Breast epithelium (tissue), 4 donors: ENCODE measurements at regions of chr5 and their contacts with region 1.

Region 1: DNA sequence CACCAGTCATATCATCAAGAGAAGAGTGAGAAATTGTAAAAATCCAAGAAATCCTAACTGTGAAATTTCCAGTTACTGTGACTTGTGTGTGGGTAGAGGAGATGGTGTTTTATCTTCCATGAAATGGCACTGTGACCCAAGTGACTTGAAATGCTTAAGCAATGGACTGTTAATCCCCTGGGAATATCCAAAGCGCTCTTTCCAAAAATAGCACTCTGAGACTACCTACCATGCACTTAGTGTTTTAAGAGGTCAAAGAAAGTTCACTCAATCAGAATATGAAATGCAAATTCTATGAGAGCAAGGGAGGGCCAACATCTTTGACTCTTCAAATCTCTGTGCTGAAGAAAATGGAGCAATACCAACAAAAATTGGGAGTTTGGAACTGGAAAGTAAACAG is 244.0 kb downstream of the GABRB2 start:
- DNase-seq: no peak
- H3K4me3 ChIP-seq: no peak overlapping the region
- H3K27ac ChIP-seq: no peak overlapping the region
- H3K4me1 ChIP-seq: no peaks in the 10 kb centered on the region
- H3K27me3 ChIP-seq: no peaks in the 10 kb centered on the region
- CTCF ChIP-seq: no peak
- POLR2A ChIP-seq: no peak

Region 2: GRCh38 chr5:161009817-161010216 is 292.7 kb before region 1 on chr5:
- intact Hi-C with region 1: loop called (anchors 10 kb)
- DNase-seq: no peak
- H3K4me3 ChIP-seq: no peak overlapping the region
- H3K27ac ChIP-seq: no peak overlapping the region
- H3K4me1 ChIP-seq: no peaks in the 10 kb centered on the region
- H3K27me3 ChIP-seq: no peaks in the 10 kb centered on the region
- CTCF ChIP-seq: no peak
- POLR2A ChIP-seq: no peak

Region 3: DNA sequence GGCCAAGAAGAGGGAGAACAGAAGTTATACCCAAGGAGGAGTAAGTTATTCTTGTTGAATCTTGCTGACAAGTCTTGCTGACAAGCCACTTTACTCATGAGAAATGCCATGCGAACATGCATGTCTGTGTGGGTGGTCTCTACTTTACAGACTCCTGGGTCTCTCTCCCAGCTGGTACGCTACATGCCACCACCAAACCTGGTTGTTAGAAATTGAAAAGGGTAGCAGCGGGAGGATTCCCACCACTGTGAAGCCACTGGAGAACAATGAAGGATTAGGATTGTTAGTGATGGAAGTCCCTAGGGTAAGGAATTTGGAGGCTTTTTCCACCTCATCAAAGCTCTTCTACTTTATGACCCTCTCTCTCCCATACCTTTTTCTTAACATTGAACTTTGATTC is 297.6 kb after region 1 on chr5:
- intact Hi-C with region 1: no loop called
- DNase-seq: no peak
- H3K4me3 ChIP-seq: no peak overlapping the region
- H3K27ac ChIP-seq: no peak overlapping the region
- H3K4me1 ChIP-seq: no peaks in the 10 kb centered on the region
- H3K27me3 ChIP-seq: no peaks in the 10 kb centered on the region
- CTCF ChIP-seq: no peak
- POLR2A ChIP-seq: no peak

Region 4: GRCh38 chr5:162139190-162139589 is 836.6 kb after region 1 on chr5:
- intact Hi-C with region 1: no loop called
- DNase-seq: no peak
- H3K4me3 ChIP-seq: no peak overlapping the region
- H3K27ac ChIP-seq: no peak overlapping the region
- H3K4me1 ChIP-seq: no peaks in the 10 kb centered on the region
- H3K27me3 ChIP-seq: no peaks in the 10 kb centered on the region
- CTCF ChIP-seq: no peak
- POLR2A ChIP-seq: no peak